ENCODE measurements at regions of chr1 and their contacts with region 1.

Region 1: DNA sequence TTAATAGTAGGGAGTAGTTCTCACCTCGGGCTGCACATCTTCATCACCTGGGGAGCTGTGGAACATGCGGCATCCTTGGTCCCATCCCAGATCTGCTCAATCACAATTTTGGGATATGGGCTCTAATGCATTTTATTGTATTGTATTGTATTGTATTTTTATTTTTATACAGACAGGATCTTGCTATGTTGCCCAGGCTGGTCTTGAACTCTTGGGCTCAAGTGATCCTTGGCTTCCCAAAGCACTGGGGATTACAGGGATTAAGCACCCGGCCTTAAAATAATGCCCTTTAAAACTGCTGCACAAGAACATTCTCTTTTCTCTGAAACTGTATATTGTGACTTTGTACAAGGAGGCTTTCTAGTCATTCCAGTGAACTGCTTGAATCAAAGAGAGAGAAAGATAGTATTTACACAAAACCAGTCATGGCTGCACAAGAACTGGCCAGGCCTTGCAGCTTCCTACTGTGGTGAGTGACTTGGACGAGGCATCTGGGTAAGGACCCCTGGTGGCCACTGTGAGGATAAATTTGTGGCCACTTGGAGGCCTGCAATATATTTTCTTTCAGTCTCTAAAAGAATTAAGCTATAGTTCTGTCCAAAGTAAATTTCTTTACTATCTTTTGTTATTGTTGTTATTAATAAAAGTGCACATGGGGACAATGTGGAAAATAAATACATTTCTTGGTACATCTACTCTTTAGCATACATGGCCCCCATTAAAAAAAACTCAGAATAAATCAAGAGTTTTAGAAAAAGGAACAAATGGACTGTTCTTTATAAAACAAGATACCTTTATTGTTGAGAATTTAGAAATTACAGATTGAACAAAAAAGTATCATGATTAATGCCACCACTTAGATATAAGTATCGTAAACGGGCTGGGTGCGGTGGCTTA is 48.0 kb downstream of the TBCE start:
- DNase-seq: peak; percentile 15
- ATAC-seq: peak; percentile 97
- H3K4me3 ChIP-seq: no peak overlapping the region
- H3K27ac ChIP-seq: no peak overlapping the region
- H3K4me1 ChIP-seq: no peaks in the 10 kb centered on the region
- H3K27me3 ChIP-seq: no peaks in the 10 kb centered on the region
- CTCF ChIP-seq: peak; percentile 78 to 81 (median 80)
- EP300 ChIP-seq: no peak
- POLR2A ChIP-seq: no peak
- RAD21 ChIP-seq: peak; percentile 73

Region 2: GRCh38 chr1:235100194-235100772 is 315.0 kb before region 1 on chr1:
- CTCF ChIA-PET with region 1: interaction called, 63 read pairs
- POLR2A ChIA-PET with region 1: interaction called, 3 read pairs
- RAD21 ChIA-PET with region 1: interaction called, 28 read pairs
- SMC1A ChIA-PET with region 1: interaction called, 46 read pairs
- in situ Hi-C with region 1: loop called (anchors 5 kb)
- intact Hi-C with region 1: loop called (anchors 2 kb)
- DNase-seq: peak; percentile 66
- ATAC-seq: peak; percentile 64
- H3K4me3 ChIP-seq: no peak overlapping the region
- H3K27ac ChIP-seq: no peak overlapping the region
- H3K4me1 ChIP-seq: peaks cover 6% of the 10 kb centered on the region
- H3K27me3 ChIP-seq: no peaks in the 10 kb centered on the region
- CTCF ChIP-seq: no peak
- EP300 ChIP-seq: peak in 1 of 2 experiments; percentile 80; a peak in 2 of 4 replicates
- POLR2A ChIP-seq: no peak
- RAD21 ChIP-seq: no peak

Region 3: GRCh38 chr1:235168375-235168774 is 246.9 kb before region 1 on chr1:
- CTCF ChIA-PET with region 1: interaction called, 5 read pairs
- POLR2A ChIA-PET with region 1: no interaction called
- RAD21 ChIA-PET with region 1: interaction called, 5 read pairs
- SMC1A ChIA-PET with region 1: interaction called, 10 read pairs
- in situ Hi-C with region 1: no loop called
- intact Hi-C with region 1: no loop called
- DNase-seq: no peak
- ATAC-seq: no peak
- H3K4me3 ChIP-seq: no peak overlapping the region
- H3K27ac ChIP-seq: no peak overlapping the region
- H3K4me1 ChIP-seq: no peaks in the 10 kb centered on the region
- H3K27me3 ChIP-seq: no peaks in the 10 kb centered on the region
- CTCF ChIP-seq: no peak
- EP300 ChIP-seq: no peak
- POLR2A ChIP-seq: no peak
- RAD21 ChIP-seq: no peak

Region 4: GRCh38 chr1:235215453-235215852 is 199.8 kb before region 1 on chr1:
- CTCF ChIA-PET with region 1: interaction called, 26 read pairs
- POLR2A ChIA-PET with region 1: no interaction called
- RAD21 ChIA-PET with region 1: interaction called, 3 read pairs
- SMC1A ChIA-PET with region 1: interaction called, 9 read pairs
- in situ Hi-C with region 1: no loop called
- intact Hi-C with region 1: no loop called
- DNase-seq: no peak
- ATAC-seq: no peak
- H3K4me3 ChIP-seq: no peak overlapping the region
- H3K27ac ChIP-seq: no peak overlapping the region
- H3K4me1 ChIP-seq: peaks cover 5% of the 10 kb centered on the region; the same call in 1 of the 2 replicates
- H3K27me3 ChIP-seq: no peaks in the 10 kb centered on the region
- CTCF ChIP-seq: no peak
- EP300 ChIP-seq: no peak
- POLR2A ChIP-seq: no peak
- RAD21 ChIP-seq: no peak

Region 5: DNA sequence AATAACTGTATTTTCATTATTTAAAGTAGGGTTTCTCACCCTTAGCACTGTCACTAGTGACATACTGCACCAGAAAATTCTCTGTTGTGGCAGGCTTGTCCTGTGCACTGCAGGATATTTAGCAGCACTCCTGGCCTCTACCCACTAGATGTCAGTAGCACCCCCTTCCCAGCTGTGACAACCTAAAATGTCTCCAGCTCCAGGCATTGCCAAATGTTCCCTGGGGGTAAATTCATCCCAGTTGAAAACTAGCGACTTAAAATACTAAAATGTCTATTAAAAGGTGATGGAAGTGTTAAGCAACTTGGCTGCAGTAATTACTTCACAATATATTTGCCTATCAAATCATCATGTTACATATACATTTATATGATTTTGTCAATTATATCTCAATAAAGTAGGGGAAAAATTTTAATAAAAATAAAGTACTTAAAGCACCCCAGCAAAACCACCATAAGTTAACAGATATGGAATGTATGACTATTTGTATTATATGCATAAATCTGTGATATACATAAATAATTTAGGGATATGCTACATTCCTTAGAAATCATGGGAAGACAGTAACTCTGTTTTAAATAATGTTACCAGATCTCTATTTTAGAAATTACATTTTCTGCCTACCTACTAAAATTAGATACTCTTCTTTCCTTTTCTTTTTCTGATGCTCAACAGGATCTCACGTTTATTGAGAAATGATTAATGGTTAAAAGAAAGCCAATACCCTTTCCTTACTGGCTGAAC is 161.9 kb before region 1 on chr1:
- CTCF ChIA-PET with region 1: interaction called, 101 read pairs
- POLR2A ChIA-PET with region 1: no interaction called
- RAD21 ChIA-PET with region 1: interaction called, 27 read pairs
- SMC1A ChIA-PET with region 1: interaction called, 46 read pairs
- in situ Hi-C with region 1: loop called (anchors 5 kb)
- intact Hi-C with region 1: loop called (anchors 1 kb)
- DNase-seq: no peak
- ATAC-seq: peak; percentile 100
- H3K4me3 ChIP-seq: no peak overlapping the region
- H3K27ac ChIP-seq: no peak overlapping the region
- H3K4me1 ChIP-seq: peaks cover 2% of the 10 kb centered on the region; the same call in 1 of the 2 replicates
- H3K27me3 ChIP-seq: no peaks in the 10 kb centered on the region
- CTCF ChIP-seq: peak; percentile 86 to 91 (median 88); a peak in 5 of 6 replicates
- EP300 ChIP-seq: no peak
- POLR2A ChIP-seq: no peak
- RAD21 ChIP-seq: peak; percentile 87

Region 6: DNA sequence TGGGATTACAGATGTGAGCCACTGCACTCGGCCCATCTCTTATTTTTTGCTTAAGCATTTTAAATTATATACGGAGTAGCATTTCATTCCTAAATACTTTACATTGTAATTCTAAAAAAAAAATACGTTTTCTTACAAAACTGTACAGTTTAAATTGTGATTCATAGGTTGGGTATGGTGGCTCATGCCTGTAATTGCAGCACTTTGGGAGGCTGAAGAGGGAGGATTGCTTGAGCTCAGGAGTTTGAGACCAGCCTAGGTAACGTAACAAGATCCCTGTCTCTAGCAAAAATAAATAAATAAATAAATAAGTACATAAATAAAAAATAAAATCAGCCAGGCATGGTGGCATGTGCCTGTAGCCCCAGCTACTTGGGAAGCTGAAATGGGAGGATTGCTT is 23.4 kb before region 1 on chr1:
- CTCF ChIA-PET with region 1: interaction called, 12 read pairs
- POLR2A ChIA-PET with region 1: no interaction called
- RAD21 ChIA-PET with region 1: interaction called, 3 read pairs
- SMC1A ChIA-PET with region 1: no interaction called
- in situ Hi-C with region 1: no loop called
- intact Hi-C with region 1: no loop called
- DNase-seq: no peak
- ATAC-seq: no peak
- H3K4me3 ChIP-seq: no peak overlapping the region
- H3K27ac ChIP-seq: no peak overlapping the region
- H3K4me1 ChIP-seq: no peaks in the 10 kb centered on the region
- H3K27me3 ChIP-seq: no peaks in the 10 kb centered on the region
- CTCF ChIP-seq: no peak
- EP300 ChIP-seq: no peak
- POLR2A ChIP-seq: no peak
- RAD21 ChIP-seq: no peak

Region 7: DNA sequence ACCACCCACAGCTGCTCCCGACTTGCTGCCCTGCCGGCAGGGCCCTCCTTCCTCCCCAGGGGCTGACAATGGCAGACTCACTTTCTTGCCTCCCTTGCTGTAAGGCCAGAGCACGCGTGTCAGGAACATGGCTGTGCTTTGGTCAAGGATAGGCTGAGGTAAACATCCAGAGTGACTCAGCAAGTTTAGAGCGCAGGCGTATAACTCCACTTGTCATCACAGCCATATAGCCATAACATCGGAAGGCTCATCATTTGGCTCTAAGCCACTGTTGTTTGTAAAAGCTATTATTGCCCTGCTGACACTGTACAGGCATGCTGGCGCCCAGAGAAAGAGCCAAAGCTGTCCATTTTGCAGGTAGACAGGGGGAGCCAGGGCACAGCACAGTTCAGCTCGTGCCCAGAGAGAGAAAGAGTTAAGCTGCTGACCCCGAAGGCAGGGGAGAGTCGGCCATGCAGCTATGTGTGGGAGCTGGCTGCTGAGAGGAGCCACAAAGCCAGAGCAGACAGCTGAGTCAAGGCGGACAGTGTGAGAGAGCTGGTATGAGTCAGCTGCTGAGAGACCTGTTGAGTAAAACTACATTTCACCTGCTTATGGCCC is 173.8 kb after region 1 on chr1:
- CTCF ChIA-PET with region 1: no interaction called
- POLR2A ChIA-PET with region 1: no interaction called
- RAD21 ChIA-PET with region 1: no interaction called
- SMC1A ChIA-PET with region 1: no interaction called
- in situ Hi-C with region 1: no loop called
- intact Hi-C with region 1: no loop called
- DNase-seq: no peak
- ATAC-seq: no peak
- H3K4me3 ChIP-seq: no peak overlapping the region
- H3K27ac ChIP-seq: no peak overlapping the region
- H3K4me1 ChIP-seq: no peaks in the 10 kb centered on the region
- H3K27me3 ChIP-seq: no peaks in the 10 kb centered on the region; a peak in 1 of 4 replicates
- CTCF ChIP-seq: no peak
- EP300 ChIP-seq: no peak
- POLR2A ChIP-seq: no peak
- RAD21 ChIP-seq: no peak

Measured in GM12878 (cell line).